ENCODE measurements at regions of chr2 and their contacts with region 1.

Region 1: GRCh38 chr2:206164261-206164862 is 4.7 kb downstream of the EEF1B2 start:
- DNase-seq: no peak
- H3K4me3 ChIP-seq: no peak overlapping the region
- H3K27ac ChIP-seq: no peak overlapping the region
- H3K27me3 ChIP-seq: no peaks in the 10 kb centered on the region
- CTCF ChIP-seq: peak; percentile 74

Region 2: GRCh38 chr2:206260188-206261012 is 96.0 kb after region 1 on chr2:
- CTCF ChIA-PET with region 1: interaction called, 12 read pairs
- POLR2A ChIA-PET with region 1: no interaction called
- DNase-seq: no peak
- H3K4me3 ChIP-seq: no peak overlapping the region
- H3K27ac ChIP-seq: no peak overlapping the region
- H3K27me3 ChIP-seq: peaks cover 61% of the 10 kb centered on the region
- CTCF ChIP-seq: peak; percentile 53

Measured in AG04450 (cell line).